AG04450 (cell line): ENCODE measurements at regions of chr3 and their contacts with region 1.

Region 1: DNA sequence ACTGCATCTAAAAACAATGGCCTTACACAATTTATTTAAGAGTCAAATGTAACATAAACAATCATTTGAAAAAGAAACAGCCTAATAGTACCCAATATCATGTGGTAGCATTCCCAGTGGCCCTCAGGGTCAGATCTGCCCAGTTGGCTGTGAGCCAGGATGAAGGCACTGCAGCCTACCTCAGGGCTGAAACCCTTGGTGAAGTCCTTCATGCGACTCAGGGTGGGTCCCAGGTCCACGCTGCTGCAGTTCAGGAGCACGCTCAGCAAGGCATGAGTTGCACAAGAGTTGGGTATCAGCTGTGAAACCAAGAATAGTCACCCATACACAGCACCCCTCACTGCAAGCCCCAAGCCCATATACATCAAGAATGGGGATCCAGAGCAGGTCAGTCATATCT is 37.1 kb downstream of the SEMA3G start:
- DNase-seq: no peak
- H3K4me3 ChIP-seq: no peak overlapping the region
- H3K27ac ChIP-seq: no peak overlapping the region
- H3K27me3 ChIP-seq: no peaks in the 10 kb centered on the region
- CTCF ChIP-seq: no peak

Region 2: DNA sequence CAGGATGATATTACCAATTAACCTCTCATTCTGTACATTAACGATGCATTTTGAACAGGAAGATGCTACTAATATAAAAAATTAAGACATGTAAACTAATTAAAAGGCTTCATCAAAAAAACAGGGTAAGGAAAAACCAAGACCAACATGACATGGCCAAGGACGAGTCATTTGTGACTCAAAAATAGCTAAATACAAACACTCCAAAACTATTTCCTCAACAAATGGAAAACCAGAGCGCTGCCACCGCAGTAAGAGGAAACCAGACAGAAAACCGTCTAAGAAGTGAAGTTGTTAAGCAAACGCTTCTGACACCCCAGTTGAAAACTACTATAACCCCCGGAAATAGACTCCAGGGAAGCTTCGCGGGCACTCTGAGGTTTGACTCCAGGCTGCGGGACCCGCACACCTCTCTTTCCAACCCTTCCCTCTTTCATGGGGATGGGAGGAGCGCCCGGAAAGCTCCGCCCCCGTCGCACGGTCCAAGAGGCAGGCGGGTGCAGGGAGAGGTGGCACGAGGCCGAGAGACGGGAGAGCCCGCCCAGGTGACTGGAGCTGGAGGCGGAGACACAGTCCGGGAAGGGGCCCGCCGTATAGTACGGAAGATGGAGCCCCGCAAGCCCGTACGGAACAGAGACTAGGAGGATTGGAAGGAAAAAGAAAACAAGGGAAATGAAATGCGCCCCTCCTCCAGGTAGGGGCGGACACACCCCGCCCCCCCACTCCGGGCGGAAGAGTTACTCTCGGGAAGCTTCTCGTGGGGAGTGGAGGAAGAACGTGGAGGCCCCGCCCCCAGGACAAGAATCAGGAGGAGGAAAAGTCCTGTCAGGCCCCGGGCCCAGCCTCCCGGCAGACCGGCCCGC is 908.7 kb before region 1 on chr3:
- CTCF ChIA-PET with region 1: no interaction called
- POLR2A ChIA-PET with region 1: no interaction called
- DNase-seq: peak; percentile 81
- H3K4me3 ChIP-seq: peak overlapping the region; percentile 78
- H3K27ac ChIP-seq: peak overlapping the region; percentile 88
- H3K27me3 ChIP-seq: no peaks in the 10 kb centered on the region
- CTCF ChIP-seq: no peak

Region 3: GRCh38 chr3:52291508-52292181 is 116.1 kb before region 1 on chr3:
- CTCF ChIA-PET with region 1: interaction called, 12 read pairs
- POLR2A ChIA-PET with region 1: no interaction called
- DNase-seq: no peak
- H3K4me3 ChIP-seq: no peak overlapping the region
- H3K27ac ChIP-seq: no peak overlapping the region
- H3K27me3 ChIP-seq: no peaks in the 10 kb centered on the region
- CTCF ChIP-seq: peak; percentile 51

Region 4: DNA sequence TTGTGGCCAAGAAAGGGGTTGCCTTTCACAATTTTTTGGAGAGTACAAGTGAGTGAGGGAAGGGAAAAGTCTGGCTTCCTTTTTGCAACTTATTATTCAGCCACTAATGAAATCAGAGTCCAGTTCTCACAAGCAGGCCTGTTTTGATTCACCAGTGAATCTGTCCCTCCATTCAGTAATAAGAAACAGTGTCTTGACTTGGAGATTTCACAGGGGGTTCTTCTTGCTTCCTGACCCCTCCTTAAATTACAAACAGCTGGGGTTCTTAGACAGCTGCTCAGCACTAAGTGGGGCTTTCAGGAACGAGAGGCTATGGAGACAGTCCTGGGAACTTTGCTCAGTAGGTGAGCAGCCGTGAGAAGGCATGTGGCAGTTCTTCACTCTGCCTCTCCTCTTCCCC is 12.6 kb after region 1 on chr3:
- CTCF ChIA-PET with region 1: interaction called, 16 read pairs
- POLR2A ChIA-PET with region 1: no interaction called
- DNase-seq: no peak
- H3K4me3 ChIP-seq: no peak overlapping the region
- H3K27ac ChIP-seq: no peak overlapping the region
- H3K27me3 ChIP-seq: peaks cover 3% of the 10 kb centered on the region
- CTCF ChIP-seq: no peak

Region 5: DNA sequence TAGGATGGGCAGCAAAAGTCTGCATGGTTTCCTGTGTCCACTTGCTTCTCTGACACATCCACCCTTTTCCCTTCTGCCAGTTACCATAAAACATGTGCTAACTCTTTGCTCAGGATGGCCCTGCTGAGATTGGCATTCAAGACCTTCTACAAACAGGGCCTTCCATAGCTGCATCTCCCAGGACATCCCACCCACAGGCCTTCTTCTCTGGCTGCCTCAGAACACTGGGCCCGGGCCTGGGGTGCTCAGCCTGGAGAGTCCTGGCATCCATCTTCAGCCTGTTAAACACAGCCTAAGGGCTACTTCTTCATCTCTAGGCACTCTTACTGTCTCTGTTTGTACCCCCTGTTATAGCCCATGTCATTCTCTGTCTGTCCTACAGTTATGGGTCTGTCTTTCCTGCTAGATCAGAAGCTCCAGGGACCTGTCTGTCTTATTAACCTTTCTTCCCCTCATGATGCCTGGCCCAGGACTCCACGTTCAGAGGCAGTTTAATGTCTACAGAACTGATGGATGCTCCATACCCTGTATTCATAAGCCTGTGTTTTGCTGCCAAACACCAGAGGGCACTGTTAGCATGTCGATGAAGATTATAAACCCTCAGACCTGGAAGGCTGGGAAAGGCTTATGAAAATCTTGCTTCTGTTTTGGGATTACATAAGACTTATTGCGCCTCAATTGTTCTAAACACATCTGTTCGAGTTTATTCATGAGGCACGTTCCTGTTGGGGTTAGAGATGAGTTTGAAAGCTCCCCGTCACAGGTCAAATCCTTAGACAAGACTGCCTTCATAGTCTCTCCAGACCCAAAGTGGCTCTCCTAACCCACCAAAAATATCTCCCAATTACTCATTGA is 20.6 kb after region 1 on chr3:
- CTCF ChIA-PET with region 1: interaction called, 31 read pairs
- POLR2A ChIA-PET with region 1: no interaction called
- DNase-seq: peak; percentile 71
- H3K4me3 ChIP-seq: no peak overlapping the region
- H3K27ac ChIP-seq: no peak overlapping the region
- H3K27me3 ChIP-seq: peaks cover 8% of the 10 kb centered on the region
- CTCF ChIP-seq: peak; percentile 89